Activated CD8-positive, alpha-beta T cell treated with anti-CD3 and anti-CD28 coated beads, Interleukin-2, amount 10 ng/mL, durations not matched to agents 7 days and 5 days (primary cell): ENCODE measurements at regions of chr9 and their contacts with region 1.

Region 1: DNA sequence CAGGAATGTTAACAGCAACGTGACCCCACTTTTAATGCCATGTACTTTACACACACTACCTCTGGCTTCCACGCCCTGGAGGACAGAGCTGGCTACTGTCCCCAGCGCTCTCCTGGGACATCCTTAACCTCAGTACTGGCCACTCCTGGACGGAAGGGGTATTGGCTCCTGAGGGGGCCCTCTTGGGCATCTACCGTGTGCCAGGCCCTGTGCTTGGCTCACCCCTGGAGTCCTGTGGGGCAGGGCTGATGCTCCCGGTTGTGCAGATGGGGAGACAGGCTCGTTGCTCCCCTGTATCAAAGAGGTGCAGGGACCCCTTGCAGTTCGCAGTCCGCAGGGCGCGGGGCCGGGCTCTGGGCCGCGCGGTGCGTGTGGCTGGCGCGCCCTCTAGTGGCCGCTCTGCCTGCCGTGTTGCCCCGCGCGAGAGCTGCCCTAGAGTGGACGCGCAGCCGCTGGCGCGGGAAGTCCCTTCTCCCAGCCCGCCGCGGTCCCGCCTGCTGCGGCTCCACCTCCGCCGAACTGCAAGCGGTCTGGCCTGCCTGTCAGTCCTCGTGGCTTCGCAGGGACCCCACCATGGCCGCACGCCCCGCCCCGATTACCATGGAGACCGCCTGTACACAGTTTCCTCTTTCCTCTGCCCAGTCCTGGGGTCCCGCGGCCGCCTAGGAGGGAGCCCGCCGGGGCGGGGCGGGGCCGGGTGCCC is at the start of gene WDR38:
- DNase-seq: peak; percentile 83
- ATAC-seq: peak; percentile 93
- H3K4me3 Mint-ChIP-seq: peak within 1 kb of the TSS; percentile 61
- H3K27ac Mint-ChIP-seq: peak within 1 kb of the TSS; percentile 47
- H3K4me1 Mint-ChIP-seq: peaks cover 9% of the 10 kb centered on the region
- H3K27me3 Mint-ChIP-seq: peaks cover 6% of the 10 kb centered on the region
- total RNA-seq, gene WDR38: not detected

Region 2: DNA sequence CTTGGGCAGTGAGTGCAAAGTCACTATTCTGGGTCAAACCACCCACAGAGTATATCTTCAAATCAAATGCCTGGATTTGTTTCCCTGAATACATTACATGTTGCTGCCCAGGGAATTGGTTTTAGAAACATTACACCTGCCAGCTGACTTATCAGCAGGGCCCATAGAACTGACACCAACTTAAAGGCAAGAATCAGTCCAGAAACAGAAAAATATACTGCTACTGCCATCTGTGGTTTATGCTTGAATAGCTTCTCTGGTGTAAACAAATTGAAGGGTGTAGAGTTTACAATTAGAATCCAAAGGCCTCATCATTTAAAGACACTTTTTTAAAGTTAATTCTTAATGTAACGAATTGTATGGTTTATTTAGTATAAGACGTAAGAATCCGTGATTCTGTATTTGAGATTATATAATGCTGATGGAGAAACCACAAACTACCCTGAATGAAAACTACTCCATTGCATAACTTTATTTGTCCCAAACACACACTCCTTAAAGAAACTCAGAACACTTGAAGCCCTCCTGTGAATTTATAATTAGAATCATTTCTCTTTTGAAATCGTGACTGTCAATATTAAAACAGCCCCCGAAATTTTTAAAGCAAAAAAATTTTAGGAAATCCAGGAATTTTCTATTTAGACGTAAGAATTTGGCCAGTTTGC is 88.1 kb before region 1 on chr9:
- CTCF ChIA-PET with region 1: interaction called, 316 read pairs
- POLR2A ChIA-PET with region 1: no interaction called
- DNase-seq: no peak
- ATAC-seq: no peak
- H3K4me3 Mint-ChIP-seq: no peak overlapping the region
- H3K27ac Mint-ChIP-seq: no peak overlapping the region
- H3K4me1 Mint-ChIP-seq: peaks cover 8% of the 10 kb centered on the region
- H3K27me3 Mint-ChIP-seq: peaks cover 69% of the 10 kb centered on the region

Region 3: DNA sequence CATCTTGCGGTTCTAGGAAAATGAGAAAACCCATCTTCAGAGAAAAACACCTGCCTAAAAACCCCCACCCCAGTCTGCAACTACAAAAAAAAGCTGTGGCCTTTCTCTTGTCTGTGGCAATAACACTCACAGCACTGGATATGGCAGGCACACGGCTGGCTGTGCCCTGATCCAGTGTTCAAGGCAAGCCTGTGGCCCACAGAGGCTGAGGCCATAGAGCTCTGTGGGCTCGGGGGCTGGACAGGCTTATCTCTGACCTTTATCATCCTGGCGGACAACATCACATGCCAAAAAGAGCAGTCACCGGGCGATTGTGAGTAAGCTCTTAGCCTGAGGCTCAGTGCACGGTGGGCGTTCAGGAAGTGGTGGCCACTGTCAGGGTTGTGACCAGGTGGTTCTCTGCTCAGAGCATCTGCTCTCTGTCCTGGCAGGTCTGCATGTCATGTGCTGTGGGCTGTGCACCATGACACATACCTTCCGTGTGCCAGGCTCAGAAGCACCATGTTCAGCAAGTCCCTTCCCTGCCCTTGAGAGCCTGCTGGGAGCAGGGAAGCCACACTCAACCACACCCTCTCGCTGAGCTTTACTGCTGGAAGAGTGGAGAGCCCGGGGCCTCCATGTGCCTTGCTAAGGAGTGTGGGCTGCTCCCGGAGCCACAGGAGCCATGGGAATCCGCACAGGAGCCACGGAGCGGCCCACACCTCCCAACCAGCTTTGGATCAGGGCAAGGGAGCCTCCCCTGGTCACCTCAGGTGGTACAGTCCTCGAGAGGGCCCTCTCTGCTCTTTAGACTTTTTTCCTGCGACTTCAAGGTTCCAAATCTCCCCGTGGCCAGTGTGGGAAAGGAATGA is 34.3 kb before region 1 on chr9:
- CTCF ChIA-PET with region 1: interaction called, 16 read pairs
- POLR2A ChIA-PET with region 1: no interaction called
- DNase-seq: peak; percentile 39
- ATAC-seq: peak; percentile 72
- H3K4me3 Mint-ChIP-seq: no peak overlapping the region
- H3K27ac Mint-ChIP-seq: no peak overlapping the region
- H3K4me1 Mint-ChIP-seq: peaks cover 19% of the 10 kb centered on the region
- H3K27me3 Mint-ChIP-seq: peaks cover 4% of the 10 kb centered on the region

Region 4: DNA sequence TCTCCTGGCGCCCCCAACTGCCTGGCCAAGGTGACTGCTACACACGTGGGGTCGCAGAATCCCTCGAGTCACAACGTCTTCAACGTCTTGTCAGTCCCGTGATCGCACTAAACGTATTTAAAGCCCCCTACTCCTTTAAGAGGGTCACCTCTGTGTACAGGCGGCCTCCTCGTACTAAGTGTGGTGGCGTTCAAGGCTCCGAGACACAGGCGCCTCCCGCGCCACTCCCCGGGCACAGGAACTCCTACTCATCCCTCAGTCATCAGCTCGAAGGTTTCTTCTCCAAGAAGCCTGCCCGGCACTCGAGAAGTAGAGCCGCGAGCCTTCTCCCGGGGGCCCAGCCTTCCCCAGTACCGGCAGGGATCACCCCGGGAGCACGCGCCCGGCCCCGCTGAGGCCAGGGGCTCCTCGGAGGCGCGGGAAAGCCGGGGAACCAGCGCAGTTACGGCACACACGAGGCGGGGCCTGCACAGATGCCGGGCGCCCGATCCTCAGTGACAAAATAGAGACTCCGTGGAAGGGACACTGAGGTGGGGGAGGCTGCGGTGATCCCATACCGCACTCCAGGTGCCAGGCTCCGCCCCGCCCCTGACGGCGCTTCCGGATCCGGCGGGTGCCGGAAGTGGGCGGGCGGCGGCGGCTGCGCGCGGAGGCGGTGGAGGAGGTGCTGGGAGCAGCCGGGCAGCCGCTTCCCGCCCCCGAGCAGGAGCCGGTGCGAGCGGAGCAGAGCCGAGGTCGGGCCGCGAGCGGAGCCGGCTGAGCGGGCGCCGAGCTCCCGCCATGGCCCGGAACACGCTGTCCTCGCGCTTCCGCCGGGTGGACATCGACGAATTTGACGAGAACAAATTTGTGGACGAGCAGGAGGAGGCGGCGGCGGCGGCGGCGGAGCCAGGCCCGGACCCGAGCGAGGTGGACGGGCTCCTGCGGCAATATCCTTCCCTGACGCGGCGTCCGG is 15.8 kb after region 1 on chr9:
- CTCF ChIA-PET with region 1: interaction called, 17 read pairs
- POLR2A ChIA-PET with region 1: interaction called, 17 read pairs
- DNase-seq: peak; percentile 93
- ATAC-seq: peak; percentile 83
- H3K4me3 Mint-ChIP-seq: peak overlapping the region; percentile 89
- H3K27ac Mint-ChIP-seq: peak overlapping the region; percentile 99
- H3K4me1 Mint-ChIP-seq: peaks cover 51% of the 10 kb centered on the region
- H3K27me3 Mint-ChIP-seq: no peaks in the 10 kb centered on the region

Region 5: GRCh38 chr9:124894741-124895170 is 41.8 kb after region 1 on chr9:
- CTCF ChIA-PET with region 1: interaction called, 14 read pairs
- POLR2A ChIA-PET with region 1: interaction called, 3 read pairs
- DNase-seq: peak; percentile 69
- ATAC-seq: peak; percentile 90
- H3K4me3 Mint-ChIP-seq: no peak overlapping the region
- H3K27ac Mint-ChIP-seq: peak overlapping the region; percentile 61
- H3K4me1 Mint-ChIP-seq: peaks cover 18% of the 10 kb centered on the region
- H3K27me3 Mint-ChIP-seq: no peaks in the 10 kb centered on the region

Region 6: GRCh38 chr9:125003332-125003731 is 150.4 kb after region 1 on chr9:
- CTCF ChIA-PET with region 1: no interaction called
- POLR2A ChIA-PET with region 1: no interaction called
- DNase-seq: no peak
- ATAC-seq: no peak
- H3K4me3 Mint-ChIP-seq: no peak overlapping the region
- H3K27ac Mint-ChIP-seq: no peak overlapping the region
- H3K4me1 Mint-ChIP-seq: no peaks in the 10 kb centered on the region
- H3K27me3 Mint-ChIP-seq: no peaks in the 10 kb centered on the region